Activated CD8-positive, alpha-beta memory T cell treated with anti-CD3 and anti-CD28 coated beads, Interleukin-2, amount 10 ng/mL, durations not matched to agents 7 days and 5 days (primary cell): ENCODE measurements at regions of chr14 and their contacts with region 1.

Region 1: GRCh38 chr14:102524466-102525218 is 15.1 kb upstream of the ANKRD9 start:
- DNase-seq: peak; percentile 99
- ATAC-seq: peak; percentile 99
- H3K4me3 Mint-ChIP-seq: peak overlapping the region; percentile 90
- H3K27ac Mint-ChIP-seq: peak overlapping the region; percentile 86
- H3K4me1 Mint-ChIP-seq: peaks cover 33% of the 10 kb centered on the region
- H3K27me3 Mint-ChIP-seq: no peaks in the 10 kb centered on the region

Region 2: DNA sequence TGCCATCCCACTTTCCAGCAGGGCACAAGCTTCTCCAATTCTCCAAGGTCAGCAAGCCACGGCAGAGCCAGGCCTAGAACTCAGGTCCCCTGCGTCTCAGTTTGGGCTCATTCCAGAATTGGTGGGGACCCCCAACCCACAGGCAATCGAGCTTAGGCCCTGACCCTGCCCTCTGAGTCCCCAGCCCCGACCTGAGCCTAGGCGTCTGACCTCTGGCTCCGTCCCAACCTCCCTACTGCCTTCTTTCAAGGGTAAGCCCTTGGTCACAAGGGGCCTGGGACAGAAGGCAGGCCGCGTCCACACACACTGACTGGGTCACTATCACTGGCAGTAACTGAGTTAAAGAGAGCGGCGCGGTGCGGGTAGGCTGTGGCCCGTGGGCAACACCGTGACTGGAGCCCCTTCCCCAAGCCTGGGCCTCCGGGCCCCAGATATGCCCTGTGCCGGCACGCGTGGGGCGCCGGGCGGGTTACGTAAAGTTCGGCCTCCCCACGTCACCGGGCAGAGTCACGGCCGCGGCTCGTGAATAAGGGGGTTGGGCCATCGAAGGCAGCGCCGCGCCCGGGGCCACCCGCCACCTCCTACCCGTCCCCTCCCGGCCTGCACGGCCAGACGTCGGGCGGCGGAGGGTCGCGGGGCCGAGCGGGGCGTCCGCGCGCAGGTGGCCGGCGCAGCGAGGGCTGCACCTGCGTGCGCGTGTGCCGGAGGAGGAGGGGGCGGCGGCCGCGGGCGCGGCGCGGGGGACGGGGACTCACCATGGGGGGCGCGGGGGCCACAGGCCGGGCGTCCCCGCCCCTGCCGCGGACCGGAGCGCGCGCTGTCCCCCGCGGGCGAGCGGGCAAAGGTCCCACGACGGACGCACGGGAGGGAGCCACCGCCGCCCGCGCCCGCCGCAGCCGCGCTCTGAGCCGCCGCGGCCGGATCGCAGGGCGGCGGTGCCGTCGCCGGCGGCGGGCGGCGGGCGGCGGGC is 15.6 kb before region 1 on chr14:
- CTCF ChIA-PET with region 1: interaction called, 23 read pairs
- DNase-seq: no peak
- ATAC-seq: peak; percentile 5
- H3K4me3 Mint-ChIP-seq: peak overlapping the region; percentile 40
- H3K27ac Mint-ChIP-seq: no peak overlapping the region
- H3K4me1 Mint-ChIP-seq: peaks cover 15% of the 10 kb centered on the region
- H3K27me3 Mint-ChIP-seq: no peaks in the 10 kb centered on the region

Region 3: DNA sequence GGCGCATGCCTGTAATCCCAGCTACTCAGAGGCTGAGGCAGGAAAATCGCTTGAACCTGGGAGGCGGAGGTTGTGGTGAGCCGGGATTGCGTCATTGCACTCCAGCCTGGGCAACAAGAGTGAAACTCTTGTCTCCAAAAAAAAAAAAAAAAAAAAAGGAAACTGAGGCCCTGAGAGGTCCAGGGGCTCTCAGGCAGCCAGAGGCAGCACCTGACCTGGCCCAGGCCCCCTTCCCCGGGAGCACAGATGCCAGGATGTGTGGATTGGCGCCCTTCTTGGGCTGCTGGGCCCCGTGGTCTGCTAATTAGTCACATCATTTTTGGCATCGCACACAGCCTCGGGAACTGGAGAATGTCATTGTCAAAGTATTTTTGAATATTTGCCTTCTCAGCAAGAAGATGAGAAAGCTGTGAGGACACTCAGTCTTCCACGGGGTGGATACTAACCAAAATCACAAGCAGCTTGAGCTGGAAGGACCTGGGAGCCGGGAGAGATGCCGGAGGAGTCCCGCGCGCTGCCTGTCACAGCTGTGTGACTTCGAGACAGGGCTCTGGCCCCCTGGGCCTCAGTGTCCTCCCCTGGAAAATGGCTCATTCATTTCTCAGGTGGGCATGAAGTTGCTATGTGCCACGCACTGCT is 55.2 kb after region 1 on chr14:
- CTCF ChIA-PET with region 1: no interaction called
- DNase-seq: no peak
- ATAC-seq: no peak
- H3K4me3 Mint-ChIP-seq: no peak overlapping the region
- H3K27ac Mint-ChIP-seq: no peak overlapping the region
- H3K4me1 Mint-ChIP-seq: no peaks in the 10 kb centered on the region
- H3K27me3 Mint-ChIP-seq: no peaks in the 10 kb centered on the region

Region 4: DNA sequence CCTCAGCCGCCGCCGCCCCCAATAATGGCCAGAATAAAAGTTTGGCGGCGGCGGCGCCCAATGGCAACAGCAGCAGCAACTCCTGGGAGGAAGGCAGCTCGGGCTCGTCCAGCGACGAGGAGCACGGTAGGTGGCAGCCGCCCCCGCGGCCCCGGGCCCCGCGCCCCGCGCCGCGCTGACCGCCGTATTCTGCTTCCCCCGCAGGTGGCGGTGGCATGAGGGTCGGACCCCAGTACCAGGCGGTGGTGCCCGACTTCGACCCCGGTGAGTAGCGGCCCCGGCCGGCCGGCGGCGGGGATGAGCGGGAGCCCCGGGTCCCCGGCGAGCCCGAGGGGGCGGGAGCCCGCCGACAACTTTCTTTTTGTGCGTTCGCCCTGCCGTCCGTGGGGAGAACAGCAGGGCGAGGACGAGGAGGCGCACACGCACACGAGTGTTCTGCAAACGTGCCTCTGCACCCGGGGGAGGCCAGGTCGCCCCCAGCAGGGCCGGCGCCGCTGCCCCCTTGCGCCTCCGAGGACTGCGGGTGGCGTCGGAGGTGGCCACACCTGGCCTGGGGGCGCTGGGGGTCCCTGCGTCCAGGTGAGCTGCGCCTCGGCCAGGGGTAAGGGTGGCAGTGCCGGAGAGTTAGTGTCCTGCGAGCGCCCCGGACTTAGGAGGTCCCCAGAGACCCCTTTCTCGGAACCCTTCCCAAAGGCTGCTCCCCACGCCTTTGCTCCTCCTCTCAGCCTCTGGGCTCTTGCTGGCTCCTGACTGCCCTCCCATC is 68.6 kb after region 1 on chr14:
- CTCF ChIA-PET with region 1: interaction called, 20 read pairs
- DNase-seq: peak; percentile 68
- ATAC-seq: peak; percentile 18
- H3K4me3 Mint-ChIP-seq: peak overlapping the region; percentile 82
- H3K27ac Mint-ChIP-seq: peak overlapping the region; percentile 76
- H3K4me1 Mint-ChIP-seq: peaks cover 21% of the 10 kb centered on the region
- H3K27me3 Mint-ChIP-seq: peaks cover 3% of the 10 kb centered on the region